ENCODE measurements at regions of chr2 and their contacts with region 1.

Region 1: DNA sequence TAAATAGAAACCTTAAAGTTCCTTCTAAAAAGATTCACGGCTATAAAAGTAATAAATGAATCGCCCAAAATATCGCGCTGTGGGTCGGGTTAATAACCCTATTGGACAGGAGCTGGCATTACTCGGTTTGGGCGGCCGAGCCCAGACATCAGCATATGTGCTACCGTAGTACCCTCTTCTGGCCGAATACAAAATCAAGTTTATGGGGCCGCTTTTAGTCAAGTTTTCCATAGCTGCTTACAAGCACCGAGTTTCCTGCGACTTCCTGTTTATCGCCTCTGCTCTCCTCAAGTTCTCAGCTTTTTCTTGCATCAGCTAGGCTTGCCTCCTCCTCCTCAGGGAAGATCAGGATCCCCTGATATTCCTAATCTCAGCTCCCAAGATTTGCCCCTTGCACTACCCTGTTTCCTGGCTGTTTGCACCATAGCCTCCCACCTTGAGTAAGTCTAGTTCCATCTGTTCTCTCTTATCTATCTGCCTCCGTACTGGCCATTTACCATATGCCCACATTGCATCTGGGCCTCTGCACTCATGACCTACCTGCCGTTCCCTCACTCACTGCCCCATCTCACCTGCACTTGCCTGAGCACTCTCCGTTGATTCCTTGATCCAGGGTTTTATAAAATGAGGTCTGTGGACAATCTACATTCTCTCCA is 56.1 kb downstream of the SLC35F5 start:
- DNase-seq: peak in 8 of 9 donors; percentile 11 to 49 (median 36)
- ATAC-seq: peak; percentile 84
- H3K4me3 ChIP-seq: peak overlapping the region; percentile 21
- H3K4me3 Mint-ChIP-seq: peak overlapping the region; percentile 3 to 74 (median 53)
- H3K27ac ChIP-seq: peak overlapping the region; percentile 13
- H3K27ac Mint-ChIP-seq: peak overlapping the region in 7 of 9 donors; percentile 46 to 90 (median 65)
- H3K4me1 ChIP-seq: peaks cover 0 to 3% of the 10 kb centered on the region in 2 donors
- H3K4me1 Mint-ChIP-seq: peaks cover 16 to 19% (median 17%) of the 10 kb centered on the region in 7 donors
- H3K27me3 ChIP-seq: no peaks in the 10 kb centered on the region
- H3K27me3 Mint-ChIP-seq: peaks cover 0 to 2% (median 0%) of the 10 kb centered on the region in 5 donors

Region 2: GRCh38 chr2:113602869-113603466 is 97.3 kb before region 1 on chr2:
- CTCF ChIA-PET with region 1: interaction called, 9 read pairs
- POLR2A ChIA-PET with region 1: no interaction called
- intact Hi-C with region 1: loop called in 1 of 2 experiments (anchors 10 kb)
- DNase-seq: no peak
- ATAC-seq: no peak
- H3K4me3 ChIP-seq: peak overlapping the region; percentile 51
- H3K4me3 Mint-ChIP-seq: peak overlapping the region; percentile 78 to 94 (median 91)
- H3K27ac ChIP-seq: peak overlapping the region; percentile 79
- H3K27ac Mint-ChIP-seq: peak overlapping the region; percentile 88 to 98 (median 94)
- H3K4me1 ChIP-seq: no peaks in the 10 kb centered on the region
- H3K4me1 Mint-ChIP-seq: peaks cover 0 to 9% (median 5%) of the 10 kb centered on the region in 7 donors
- H3K27me3 ChIP-seq: no peaks in the 10 kb centered on the region
- H3K27me3 Mint-ChIP-seq: no peaks in the 10 kb centered on the region

Measured in naive thymus-derived CD4-positive, alpha-beta T cell (primary cell).